Caco-2 (cell line): ENCODE measurements at regions of chr1 and their contacts with region 1.

Region 1: DNA sequence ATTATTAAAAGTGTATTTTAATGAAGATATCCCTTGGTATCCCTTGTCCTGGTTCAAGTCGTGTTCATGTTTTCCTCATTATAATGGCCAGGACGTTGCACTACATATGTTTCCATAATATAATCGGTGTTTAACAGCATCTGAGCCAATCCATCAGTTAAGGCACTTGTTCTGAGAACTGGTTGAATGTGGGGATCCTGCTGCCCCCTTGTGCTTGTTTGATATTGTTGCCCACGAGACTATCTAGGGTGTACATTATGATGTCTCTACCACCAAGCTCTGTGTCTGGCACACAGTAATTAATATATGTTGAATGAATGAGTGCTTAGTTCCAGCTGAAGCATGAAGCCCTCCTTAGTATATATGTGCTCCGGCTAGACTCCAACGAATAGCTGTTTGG is 193.0 kb downstream of the CACNA1E start:
- DNase-seq: peak in 1 of 2 experiments; percentile 45
- H3K4me3 ChIP-seq: no peak overlapping the region
- H3K4me3 Mint-ChIP-seq: no peak overlapping the region
- H3K27ac Mint-ChIP-seq: no peak overlapping the region
- H3K4me1 ChIP-seq: no peaks in the 10 kb centered on the region
- H3K4me1 Mint-ChIP-seq: no peaks in the 10 kb centered on the region
- H3K27me3 ChIP-seq: peaks cover 1% of the 10 kb centered on the region; the same call in 1 of the 2 replicates
- H3K27me3 Mint-ChIP-seq: peaks cover 24% of the 10 kb centered on the region
- CTCF ChIP-seq: peak; percentile 32 to 62

Region 2: DNA sequence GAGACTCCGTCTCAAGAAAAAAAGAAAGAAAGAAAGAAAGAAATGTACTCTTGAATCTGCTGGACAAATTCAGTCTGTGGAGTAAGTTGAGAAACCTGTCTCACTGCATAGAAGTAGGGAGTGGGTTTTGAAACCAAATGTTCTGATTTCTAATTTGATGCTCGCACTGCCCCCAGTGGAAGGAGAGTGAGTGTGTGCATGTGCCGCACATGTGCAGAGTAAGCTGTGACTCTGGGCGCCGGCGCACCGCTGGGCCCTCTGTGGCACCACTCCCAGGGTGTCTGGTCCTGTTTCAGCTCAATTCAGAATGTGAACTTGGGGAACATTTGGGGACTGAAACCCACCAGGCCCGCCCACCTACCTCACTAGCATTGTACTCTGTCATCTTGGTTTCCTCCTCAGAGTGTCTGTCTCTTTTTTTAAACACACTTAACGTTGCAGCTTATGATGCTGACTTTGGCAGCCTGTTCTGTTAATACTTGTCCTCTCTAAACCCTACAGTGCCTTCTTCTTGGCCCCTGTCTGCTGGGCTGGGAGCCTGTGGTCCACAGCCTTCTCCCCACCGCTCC is 88.3 kb before region 1 on chr1:
- CTCF ChIA-PET with region 1: no interaction called
- POLR2A ChIA-PET with region 1: no interaction called
- intact Hi-C with region 1: loop called (anchors 5 kb)
- DNase-seq: peak in 1 of 2 experiments; percentile 27
- H3K4me3 ChIP-seq: no peak overlapping the region
- H3K4me3 Mint-ChIP-seq: no peak overlapping the region
- H3K27ac Mint-ChIP-seq: no peak overlapping the region
- H3K4me1 ChIP-seq: no peaks in the 10 kb centered on the region
- H3K4me1 Mint-ChIP-seq: no peaks in the 10 kb centered on the region
- H3K27me3 ChIP-seq: no peaks in the 10 kb centered on the region
- H3K27me3 Mint-ChIP-seq: peaks cover 12% of the 10 kb centered on the region
- CTCF ChIP-seq: peak; percentile 33 to 46